ENCODE measurements at regions of chr7 and their contacts with region 1.

Region 1: DNA sequence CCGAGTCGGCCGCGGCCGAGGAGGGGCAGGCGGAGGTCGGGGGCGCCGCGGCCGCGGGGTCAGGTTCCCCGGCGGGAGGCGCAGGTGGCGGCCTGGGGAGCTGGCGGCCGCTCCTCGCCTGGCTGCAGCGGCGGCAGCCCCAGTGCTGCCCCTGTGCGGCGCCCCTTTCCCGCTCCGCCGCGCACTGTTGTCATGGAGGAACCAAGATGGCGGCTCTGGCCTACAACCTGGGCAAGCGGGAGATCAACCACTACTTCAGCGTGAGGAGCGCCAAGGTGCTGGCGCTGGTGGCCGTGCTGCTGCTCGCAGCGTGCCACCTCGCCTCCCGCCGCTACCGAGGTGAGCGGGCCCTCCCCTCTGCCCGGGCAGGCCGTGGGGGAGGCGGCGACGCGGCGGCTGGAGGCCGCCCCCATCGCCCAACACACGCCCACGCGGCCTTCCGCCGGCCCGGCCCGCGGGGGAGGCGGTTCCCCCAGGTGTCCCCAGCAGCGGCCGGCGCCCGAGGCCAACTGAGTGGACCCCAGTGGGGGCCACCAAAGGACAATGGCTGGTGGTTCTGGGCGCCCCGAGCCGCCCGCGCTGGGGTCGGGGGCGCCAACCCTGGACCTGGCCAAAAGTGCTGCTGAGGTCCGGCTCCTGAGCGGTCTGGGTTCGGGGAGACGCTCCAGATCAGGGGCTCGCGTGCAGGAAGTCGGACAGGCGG is 421 bp downstream of the CASD1 start:
- DNase-seq: peak; percentile 27
- ATAC-seq: peak; percentile 80
- H3K4me3 ChIP-seq: peak overlapping the region; percentile 71
- H3K27ac ChIP-seq: peak overlapping the region; percentile 79
- H3K4me1 ChIP-seq: peaks cover 14% of the 10 kb centered on the region
- H3K27me3 ChIP-seq: no peaks in the 10 kb centered on the region
- CTCF ChIP-seq: peak in 2 of 3 experiments; percentile 16 to 36; a peak in 2 of 6 replicates
- EP300 ChIP-seq: peak in 1 of 2 experiments; percentile 37; a peak in 1 of 4 replicates
- POLR2A ChIP-seq: peak; percentile 85
- RAD21 ChIP-seq: no peak

Region 2: DNA sequence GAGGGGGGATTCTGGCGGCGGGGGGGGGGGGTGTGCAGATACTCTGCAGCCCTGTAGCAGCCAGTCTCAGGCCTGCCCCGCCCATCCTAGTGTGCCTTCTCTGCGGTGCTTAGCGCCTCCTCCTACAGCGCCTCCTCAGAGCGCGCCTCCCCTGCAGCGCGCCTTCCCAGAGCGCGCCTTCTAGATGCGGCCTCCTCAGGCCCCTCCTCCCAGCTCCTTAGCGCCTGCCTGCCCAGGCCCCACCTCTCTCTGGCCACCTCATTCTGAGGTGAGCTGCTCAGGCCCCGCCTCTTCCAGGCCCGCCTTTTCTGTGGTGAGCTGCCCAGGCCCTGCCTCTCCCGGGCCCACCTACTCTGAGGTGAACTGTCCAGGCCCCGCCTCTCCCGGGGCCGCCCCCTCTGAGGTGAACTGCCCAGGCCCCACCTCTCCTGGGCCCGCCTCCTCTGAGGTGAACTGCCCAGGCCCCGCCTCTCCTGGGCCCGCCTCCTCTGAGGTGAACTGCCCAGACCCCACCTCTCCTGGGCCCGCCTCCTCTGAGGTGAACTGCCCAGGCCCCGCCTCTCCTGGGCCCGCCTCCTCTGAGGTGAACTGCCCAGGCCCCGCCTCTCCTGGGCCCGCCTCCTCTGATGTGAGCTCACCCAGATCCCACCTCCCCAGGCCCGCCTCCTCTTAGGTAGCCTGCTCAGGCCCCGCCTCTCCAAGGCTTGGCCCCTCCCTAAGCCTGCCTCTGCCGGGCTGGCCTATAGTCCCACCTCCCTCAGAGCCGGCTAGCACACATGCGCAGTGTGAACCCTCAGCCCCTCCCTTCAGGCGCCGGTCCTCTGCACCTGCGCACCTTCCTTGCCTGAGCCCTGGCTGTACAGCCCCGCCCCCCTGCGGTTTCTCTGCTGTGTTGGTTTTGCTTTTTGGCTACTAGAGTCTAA is 148.0 kb after region 1 on chr7:
- CTCF ChIA-PET with region 1: interaction called, 4 read pairs
- POLR2A ChIA-PET with region 1: interaction called, 9 read pairs
- RAD21 ChIA-PET with region 1: interaction called, 4 read pairs
- SMC1A ChIA-PET with region 1: interaction called, 10 read pairs
- in situ Hi-C with region 1: no loop called
- intact Hi-C with region 1: loop called (anchors 5 kb)
- DNase-seq: peak; percentile 83
- ATAC-seq: peak; percentile 88
- H3K4me3 ChIP-seq: no peak overlapping the region
- H3K27ac ChIP-seq: no peak overlapping the region
- H3K4me1 ChIP-seq: no peaks in the 10 kb centered on the region; the same call in 1 of the 2 replicates
- H3K27me3 ChIP-seq: no peaks in the 10 kb centered on the region
- CTCF ChIP-seq: peak in 1 of 3 experiments; percentile 16; a peak in 1 of 6 replicates
- EP300 ChIP-seq: no peak
- POLR2A ChIP-seq: peak; percentile 56; the same call in 1 of the 2 replicates
- RAD21 ChIP-seq: no peak

Region 3: DNA sequence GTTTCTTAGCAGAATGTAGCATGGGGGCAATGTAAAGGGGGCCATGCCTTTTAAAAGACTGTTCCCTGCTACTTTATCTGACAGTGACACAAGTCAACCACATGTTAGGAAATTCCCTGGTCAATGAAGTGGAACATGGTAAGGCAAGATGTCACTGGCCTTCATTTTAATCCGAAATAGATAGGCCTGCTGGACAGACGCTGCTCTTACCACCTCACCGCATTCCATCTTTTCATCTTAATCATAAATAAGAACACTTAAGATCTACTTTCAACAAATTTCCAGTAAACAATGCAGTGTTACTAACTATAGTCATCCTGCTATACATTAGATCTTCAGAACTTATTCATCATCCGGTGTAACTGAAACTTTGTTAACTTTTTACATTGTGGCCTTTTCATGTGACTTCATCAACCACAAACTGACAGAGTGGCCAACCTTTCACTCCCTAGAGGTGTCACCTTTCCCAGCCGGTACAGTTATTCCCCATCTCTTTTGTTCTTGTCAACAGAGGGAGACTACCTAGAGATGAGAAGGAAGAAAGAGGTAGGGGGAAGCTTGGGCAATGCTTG is 991.3 kb after region 1 on chr7:
- CTCF ChIA-PET with region 1: no interaction called
- POLR2A ChIA-PET with region 1: no interaction called
- RAD21 ChIA-PET with region 1: interaction called, 3 read pairs
- SMC1A ChIA-PET with region 1: no interaction called
- in situ Hi-C with region 1: no loop called
- intact Hi-C with region 1: loop called (anchors 5 kb)
- DNase-seq: peak; percentile 87
- ATAC-seq: peak; percentile 78
- H3K4me3 ChIP-seq: peak overlapping the region; percentile 34; the same call in 1 of the 2 replicates
- H3K27ac ChIP-seq: peak overlapping the region; percentile 56
- H3K4me1 ChIP-seq: peaks cover 8% of the 10 kb centered on the region
- H3K27me3 ChIP-seq: no peaks in the 10 kb centered on the region
- CTCF ChIP-seq: no peak
- EP300 ChIP-seq: peak; percentile 96 to 97
- POLR2A ChIP-seq: no peak
- RAD21 ChIP-seq: no peak

Measured in GM12878 (cell line).